Activated CD4-positive, alpha-beta memory T cell treated with anti-CD3 and anti-CD28 coated beads, Interleukin-2, amount 10 ng/mL, durations not matched to agents 7 days and 5 days (primary cell): ENCODE measurements at regions of chr17 and their contacts with region 1.

Region 1: GRCh38 chr17:50783193-50783660 is 15.9 kb upstream of the ANKRD40CL start:
- DNase-seq: peak; percentile 82
- H3K4me3 Mint-ChIP-seq: no peak overlapping the region
- H3K27ac Mint-ChIP-seq: no peak overlapping the region
- H3K4me1 Mint-ChIP-seq: peaks cover 30% of the 10 kb centered on the region
- H3K27me3 Mint-ChIP-seq: peaks cover 38% of the 10 kb centered on the region

Region 2: DNA sequence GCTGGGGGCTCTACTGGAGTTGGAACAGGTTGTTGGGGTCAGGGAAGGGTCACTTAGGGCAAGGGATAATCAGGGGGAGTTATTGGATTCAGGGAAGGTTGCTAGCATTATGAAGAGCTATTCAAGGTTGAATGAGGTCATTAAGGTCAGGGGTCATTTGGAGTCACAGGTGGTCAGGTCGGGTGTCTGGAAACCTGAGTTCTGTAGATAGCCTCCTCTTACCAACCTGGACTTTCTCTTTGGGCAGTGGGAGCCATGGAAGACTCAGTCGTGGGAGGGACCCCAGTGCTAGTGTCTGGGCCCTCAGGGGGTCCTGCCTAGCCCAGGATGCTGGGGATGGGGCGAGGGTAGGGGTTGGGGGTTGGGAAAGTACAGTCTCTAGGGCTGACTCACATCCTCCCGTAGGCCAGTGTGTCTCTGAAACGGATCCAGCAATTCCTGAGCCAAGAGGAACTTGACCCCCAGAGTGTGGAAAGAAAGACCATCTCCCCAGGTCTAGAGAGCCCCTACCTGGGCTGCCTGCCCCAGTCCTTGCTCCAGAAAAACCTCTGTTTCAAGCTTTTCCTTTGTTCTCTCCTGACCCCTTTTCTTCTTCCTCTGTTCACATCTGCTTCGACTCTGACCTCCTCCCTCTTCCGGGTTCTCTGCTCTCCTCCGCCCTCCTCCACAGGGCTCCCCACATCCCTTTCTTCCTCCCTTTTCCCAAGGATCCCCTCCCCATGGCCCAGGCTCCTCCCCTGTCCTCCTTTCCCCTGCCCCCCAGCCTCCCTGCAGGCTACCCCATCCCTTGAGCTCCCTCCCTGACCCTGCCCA is 115.0 kb before region 1 on chr17:
- CTCF ChIA-PET with region 1: no interaction called
- POLR2A ChIA-PET with region 1: no interaction called
- DNase-seq: no peak
- H3K4me3 Mint-ChIP-seq: no peak overlapping the region
- H3K27ac Mint-ChIP-seq: no peak overlapping the region
- H3K4me1 Mint-ChIP-seq: peaks cover 10% of the 10 kb centered on the region
- H3K27me3 Mint-ChIP-seq: peaks cover 3% of the 10 kb centered on the region

Region 3: DNA sequence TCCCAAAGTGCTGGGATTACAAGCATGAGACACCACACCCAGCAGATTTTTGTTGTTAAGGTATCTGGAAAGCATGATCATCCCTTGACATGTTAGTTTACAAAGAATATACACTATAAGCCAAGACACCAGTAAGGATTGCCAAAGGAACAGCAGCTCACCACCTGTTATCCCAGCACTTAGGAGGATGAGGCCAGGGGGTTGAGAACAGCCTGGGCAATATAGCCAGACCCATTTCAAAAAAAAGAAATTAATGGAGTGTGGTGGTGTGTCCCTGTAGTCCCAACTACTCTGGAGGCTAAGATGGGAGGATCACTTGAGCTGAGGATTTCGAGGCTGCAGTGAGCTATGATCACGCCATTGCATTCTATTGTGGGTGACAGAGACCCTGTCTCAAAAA is 21.1 kb before region 1 on chr17:
- CTCF ChIA-PET with region 1: interaction called, 12 read pairs
- POLR2A ChIA-PET with region 1: interaction called, 3 read pairs
- DNase-seq: no peak
- H3K4me3 Mint-ChIP-seq: no peak overlapping the region
- H3K27ac Mint-ChIP-seq: no peak overlapping the region
- H3K4me1 Mint-ChIP-seq: peaks cover 15% of the 10 kb centered on the region
- H3K27me3 Mint-ChIP-seq: peaks cover 24% of the 10 kb centered on the region

Region 4: DNA sequence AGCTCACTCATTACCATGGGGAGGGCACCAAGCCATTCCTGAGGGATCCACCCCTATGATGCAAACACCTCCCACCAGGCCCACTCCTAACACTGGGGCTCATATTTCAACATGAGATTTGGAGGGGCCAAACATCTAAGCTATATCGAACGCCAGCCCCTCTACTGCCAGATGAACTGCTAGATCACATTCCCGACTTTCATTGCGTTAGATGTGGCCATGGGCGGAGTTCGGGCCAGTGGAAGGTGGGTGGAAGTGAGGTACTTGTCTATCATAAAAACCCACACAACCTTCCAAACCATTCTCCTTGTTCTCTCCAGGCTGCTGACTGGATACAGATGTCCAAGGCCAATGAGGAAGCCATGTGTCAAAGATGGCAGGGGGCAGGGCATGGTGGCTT is 11.1 kb after region 1 on chr17:
- CTCF ChIA-PET with region 1: interaction called, 10 read pairs
- POLR2A ChIA-PET with region 1: no interaction called
- DNase-seq: no peak
- H3K4me3 Mint-ChIP-seq: no peak overlapping the region
- H3K27ac Mint-ChIP-seq: no peak overlapping the region
- H3K4me1 Mint-ChIP-seq: no peaks in the 10 kb centered on the region
- H3K27me3 Mint-ChIP-seq: peaks cover 12% of the 10 kb centered on the region

Region 5: DNA sequence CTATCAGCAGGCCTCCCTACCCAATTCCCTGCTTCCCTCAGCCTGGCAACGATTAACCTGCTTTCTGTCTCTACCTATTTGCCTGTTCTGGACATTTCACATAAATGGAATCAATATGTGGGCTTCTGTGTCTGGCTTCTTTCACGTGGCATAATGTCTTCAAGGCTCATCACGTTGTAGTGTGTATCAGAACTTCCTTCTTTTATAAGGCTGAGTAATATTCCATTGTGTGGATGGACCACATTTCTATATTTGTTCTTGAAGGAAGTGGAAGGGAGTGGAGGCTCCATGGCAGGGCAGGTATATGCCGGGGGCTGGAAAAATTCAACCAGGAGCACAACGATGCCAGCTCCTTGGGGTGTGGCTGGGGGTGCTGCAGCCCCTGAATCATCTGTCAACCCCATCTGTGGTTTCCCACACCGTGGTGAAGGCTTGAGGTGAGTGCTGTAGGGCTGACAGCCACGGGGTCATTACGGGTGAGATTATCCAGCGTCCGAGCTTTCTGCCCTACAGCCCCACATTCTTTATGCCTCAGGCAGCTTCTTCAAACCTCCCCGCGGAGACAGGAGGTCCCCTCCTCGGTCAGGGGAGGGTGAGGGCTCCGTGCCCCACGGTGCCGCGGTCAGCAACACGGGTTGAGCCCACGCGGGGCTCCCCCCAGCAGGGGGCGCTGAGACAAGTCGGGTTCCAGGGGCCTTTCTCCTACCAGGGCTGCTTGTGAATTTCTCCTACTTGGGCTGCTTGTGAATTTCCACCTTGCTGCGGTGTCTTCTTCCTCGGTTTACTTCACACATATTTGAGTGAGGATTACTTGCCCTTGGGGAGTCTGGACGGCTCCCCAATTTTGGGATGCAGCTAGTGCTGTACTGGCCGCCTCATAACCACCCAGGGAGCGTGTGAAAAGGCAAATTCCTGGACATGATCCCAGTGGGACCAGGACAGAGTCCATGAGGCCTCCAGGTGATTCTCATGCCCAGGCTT is 33.8 kb after region 1 on chr17:
- CTCF ChIA-PET with region 1: interaction called, 14 read pairs
- POLR2A ChIA-PET with region 1: no interaction called
- DNase-seq: peak; percentile 54
- H3K4me3 Mint-ChIP-seq: no peak overlapping the region
- H3K27ac Mint-ChIP-seq: no peak overlapping the region
- H3K4me1 Mint-ChIP-seq: peaks cover 27% of the 10 kb centered on the region
- H3K27me3 Mint-ChIP-seq: peaks cover 34% of the 10 kb centered on the region

Region 6: GRCh38 chr17:50841949-50842354 is 58.7 kb after region 1 on chr17:
- CTCF ChIA-PET with region 1: interaction called, 26 read pairs
- POLR2A ChIA-PET with region 1: no interaction called
- DNase-seq: peak; percentile 65
- H3K4me3 Mint-ChIP-seq: no peak overlapping the region
- H3K27ac Mint-ChIP-seq: no peak overlapping the region
- H3K4me1 Mint-ChIP-seq: no peaks in the 10 kb centered on the region
- H3K27me3 Mint-ChIP-seq: no peaks in the 10 kb centered on the region